Head of caudate nucleus (tissue), 42 donors: ENCODE measurements at regions of chr5 and their contacts with region 1.

Region 1: GRCh38 chr5:67268231-67269021 is 71.8 kb upstream of the CD180 start:
- DNase-seq: peak; percentile 25 to 93 (median 68)

Region 2: DNA sequence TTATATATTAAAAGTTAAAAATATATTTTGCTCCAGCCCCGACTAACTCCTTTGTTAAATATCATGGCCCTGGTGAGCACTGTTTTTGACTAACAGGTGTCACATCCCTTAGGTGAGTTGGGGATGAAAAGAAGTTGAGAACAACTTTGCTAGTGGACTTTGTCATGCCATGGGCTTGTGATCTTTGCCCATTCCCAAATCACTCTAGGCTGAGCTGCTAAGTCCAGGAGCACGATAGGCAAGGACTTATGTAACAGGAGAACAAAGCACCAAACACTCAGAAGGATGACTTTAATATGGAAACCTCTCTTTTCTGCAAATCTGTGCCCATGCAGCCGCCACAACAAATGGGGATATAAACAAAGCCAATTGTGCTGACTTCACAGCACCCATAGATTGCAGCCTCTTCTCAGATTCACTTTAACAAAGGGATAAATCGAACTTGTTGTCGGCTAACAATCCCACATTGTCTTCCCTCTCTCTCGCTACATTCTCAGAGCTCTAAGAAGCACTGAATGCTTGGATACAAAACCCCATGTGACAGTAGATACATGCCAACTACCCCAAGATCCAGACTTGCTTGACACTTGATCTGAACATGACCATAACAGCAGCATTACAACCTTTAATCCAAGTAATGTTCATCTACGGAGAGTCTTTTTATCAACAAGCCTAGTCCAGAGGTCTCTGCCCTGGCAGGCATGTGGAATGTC is 15.0 kb after region 1 on chr5:
- intact Hi-C with region 1: loop called (anchors 2 kb)
- DNase-seq: peak in 41 of 42 donors; percentile 19 to 90 (median 66)

Region 3: DNA sequence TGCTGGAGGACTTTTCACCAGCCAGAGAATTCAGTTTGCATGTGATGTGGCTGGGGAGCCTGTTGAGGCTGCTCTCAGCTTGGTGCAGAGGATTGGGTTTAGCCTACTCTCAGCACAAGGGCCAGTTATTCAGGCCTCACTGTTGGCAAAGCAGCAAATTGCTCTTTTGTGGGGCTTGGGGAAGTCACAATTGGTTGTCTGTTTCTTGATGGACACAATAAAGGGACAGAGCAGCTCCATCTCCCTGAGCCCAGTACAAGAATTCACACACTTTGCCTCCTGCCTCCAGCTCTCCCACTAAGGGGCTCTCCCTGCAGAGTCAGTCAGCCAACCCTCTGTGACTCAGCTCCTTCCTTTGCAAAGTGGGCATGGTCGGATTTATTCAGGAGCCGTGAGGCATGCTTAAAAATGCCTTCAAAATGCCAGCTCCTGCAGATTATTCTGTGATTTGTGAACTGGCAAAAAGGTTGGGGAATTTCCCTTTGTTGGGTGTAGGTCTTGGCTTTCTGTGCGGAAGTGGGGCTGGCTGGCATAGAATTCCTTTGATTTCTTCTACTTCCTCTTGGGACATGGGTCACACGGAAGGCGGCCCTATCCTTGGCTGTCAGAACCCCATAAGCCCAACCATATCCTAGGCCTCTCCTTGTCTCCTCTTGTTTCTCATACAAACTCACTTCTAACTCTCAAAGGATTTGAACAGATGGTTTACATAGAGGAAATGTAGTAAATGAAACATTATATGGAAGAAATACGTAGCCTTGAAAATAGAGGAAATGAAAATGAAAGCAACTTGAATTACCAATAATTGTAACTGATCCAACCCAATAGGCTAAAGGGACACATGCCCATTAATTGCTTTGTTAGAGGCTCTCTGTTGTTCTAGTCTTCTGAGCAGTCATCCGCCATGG is 46.9 kb after region 1 on chr5:
- intact Hi-C with region 1: loop called (anchors 10 kb)
- DNase-seq: peak; percentile 49 to 96 (median 86)

Region 4: DNA sequence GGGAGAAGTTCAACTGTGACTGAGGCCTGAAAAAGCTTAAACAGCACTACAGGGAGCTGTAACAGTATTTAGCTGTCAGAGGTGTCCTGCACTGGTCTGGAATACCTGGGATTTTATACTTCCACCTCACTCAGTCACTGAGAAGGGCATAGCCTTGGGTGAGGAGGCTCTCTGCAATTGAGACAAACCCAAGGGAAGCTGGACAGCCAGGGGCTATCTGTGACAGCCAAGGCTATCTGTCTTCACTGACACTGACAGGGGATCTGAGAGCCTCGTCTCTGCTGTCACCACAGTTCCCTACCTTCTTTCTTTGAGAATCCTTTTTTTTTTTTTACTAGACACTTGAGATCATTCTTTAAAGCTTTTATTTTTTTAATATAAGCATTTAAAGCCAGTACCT is 284.3 kb after region 1 on chr5:
- intact Hi-C with region 1: no loop called
- DNase-seq: no peak

Region 5: DNA sequence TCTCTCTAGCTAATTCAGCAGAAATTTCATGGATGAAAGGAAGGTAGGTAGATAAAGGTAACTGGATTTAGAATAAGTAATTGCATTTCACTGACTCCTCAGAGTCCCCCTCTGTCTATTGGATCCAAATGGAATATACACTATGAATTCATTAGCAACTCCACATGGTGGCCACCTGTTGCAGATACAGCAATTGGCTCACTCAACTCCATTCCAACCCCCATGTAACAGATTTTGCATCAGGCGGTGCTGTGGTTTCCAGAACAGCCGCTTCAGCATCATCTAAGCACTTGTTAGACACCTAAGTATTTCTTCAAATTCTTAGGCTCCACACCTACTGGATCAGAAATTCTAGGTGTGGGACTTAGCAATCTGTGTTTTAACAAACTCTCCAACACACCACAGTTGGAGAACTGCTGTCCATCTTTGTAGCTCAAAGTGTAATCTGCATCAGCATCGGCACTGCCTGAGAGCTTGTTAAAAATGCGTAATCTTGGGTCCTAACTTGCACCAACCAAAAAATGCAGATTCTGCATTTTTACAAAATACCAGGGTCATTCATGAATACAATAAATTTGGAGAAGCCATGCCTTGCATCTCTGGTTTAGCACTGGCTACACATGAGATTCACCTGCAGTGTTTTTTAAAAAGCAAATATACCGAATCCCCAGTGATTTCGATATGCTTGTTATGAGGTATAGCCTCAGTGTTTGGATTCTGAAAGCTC is 341.9 kb after region 1 on chr5:
- intact Hi-C with region 1: no loop called
- DNase-seq: no peak